Dorsolateral prefrontal cortex (tissue), 120 donors: ENCODE measurements at regions of chr6 and their contacts with region 1.

Region 1: GRCh38 chr6:41591859-41592502 is 45.8 kb downstream of the FOXP4 start:
- DNase-seq: peak in 9 of 10 donors; percentile 70 to 84 (median 79)
- H3K4me3 ChIP-seq: no peak overlapping the region
- H3K27ac ChIP-seq: peak overlapping the region in 1 of 59 donors; percentile 19
- H3K27me3 ChIP-seq: no peaks in the 10 kb centered on the region
- CTCF ChIP-seq: peak; percentile 83 to 98 (median 94)

Region 2: GRCh38 chr6:41367700-41368099 is 224.3 kb before region 1 on chr6:
- intact Hi-C with region 1: loop called (anchors 1 to 2 kb)
- DNase-seq: peak; percentile 49 to 79 (median 74)
- H3K4me3 ChIP-seq: no peak overlapping the region
- H3K27ac ChIP-seq: no peak overlapping the region
- H3K27me3 ChIP-seq: peaks cover 0 to 61% (median 30%) of the 10 kb centered on the region in 45 donors
- CTCF ChIP-seq: peak; percentile 19 to 91 (median 80)

Region 3: GRCh38 chr6:41463062-41463930 is 128.7 kb before region 1 on chr6:
- intact Hi-C with region 1: loop called (anchors 1 to 2 kb)
- DNase-seq: peak in 7 of 10 donors; percentile 8 to 78 (median 58)
- H3K4me3 ChIP-seq: no peak overlapping the region
- H3K27ac ChIP-seq: no peak overlapping the region
- H3K27me3 ChIP-seq: peaks cover 0 to 16% (median 0%) of the 10 kb centered on the region in 45 donors
- CTCF ChIP-seq: peak in 51 of 56 donors; percentile 26 to 74 (median 52)

Region 4: DNA sequence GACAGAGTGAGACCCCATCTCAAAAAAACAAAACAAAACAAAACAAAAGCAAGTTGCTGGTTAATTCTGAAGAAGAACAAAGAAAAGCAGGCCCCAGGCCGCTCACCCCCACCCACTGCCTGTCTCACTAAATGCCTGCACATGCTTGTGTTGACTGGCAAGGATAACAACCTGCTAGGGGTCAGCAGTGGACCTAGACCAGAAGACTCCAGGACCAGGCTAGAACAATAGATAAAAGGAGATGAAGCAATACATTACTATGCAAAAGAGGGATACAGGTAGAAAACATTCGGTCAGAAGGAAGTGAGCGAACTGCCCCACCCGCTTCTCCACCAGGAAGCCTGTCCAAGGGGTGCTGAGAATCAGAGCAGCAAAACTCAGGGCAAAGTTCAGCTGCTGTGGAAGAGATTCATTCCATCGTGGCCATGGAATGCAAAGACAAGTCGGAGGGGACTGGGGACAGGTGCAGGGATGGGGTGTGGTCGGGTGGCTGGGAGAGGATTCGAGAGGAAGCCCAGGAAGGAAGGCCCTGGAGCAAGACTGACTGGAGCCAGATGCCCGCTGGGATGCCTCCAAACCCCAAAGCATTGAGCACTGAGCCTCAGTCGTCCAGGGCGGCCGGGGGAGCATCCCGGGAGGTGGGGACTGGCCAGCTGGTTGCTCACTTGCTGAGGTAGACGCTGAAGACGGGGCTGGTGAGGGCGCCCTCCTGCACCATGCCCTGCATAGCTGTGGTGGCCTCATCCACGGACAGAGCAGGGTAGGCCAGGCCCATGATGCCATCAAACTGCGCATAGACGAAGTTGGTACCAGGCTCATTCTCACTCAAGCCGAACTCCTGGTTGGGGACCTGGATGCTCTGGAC is 149.9 kb after region 1 on chr6:
- intact Hi-C with region 1: no loop called
- DNase-seq: no peak
- H3K4me3 ChIP-seq: no peak overlapping the region
- H3K27ac ChIP-seq: no peak overlapping the region
- H3K27me3 ChIP-seq: no peaks in the 10 kb centered on the region
- CTCF ChIP-seq: no peak